ENCODE measurements at regions of chr12 and their contacts with region 1.

Region 1: DNA sequence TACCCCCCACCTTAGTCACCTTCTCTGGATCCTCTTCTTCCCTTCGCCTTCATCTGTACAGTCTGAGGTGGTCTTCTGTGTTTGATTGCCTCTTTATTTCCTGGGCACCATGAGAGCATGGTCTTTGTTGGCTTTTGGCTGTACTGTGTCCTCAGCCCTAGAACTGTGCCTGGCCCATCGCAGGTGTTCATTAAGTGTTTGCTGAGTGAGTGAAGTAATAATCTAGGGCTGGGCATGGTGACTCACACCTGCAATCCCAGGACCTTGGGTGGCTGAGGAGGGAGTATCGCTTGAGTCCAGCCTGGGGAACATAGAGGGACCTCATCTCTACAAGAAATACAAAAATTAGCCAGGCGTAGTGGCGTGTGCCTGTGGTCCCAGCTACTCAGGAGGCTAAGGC is 13.9 kb downstream of the ALDH2 start:
- DNase-seq: no peak
- ATAC-seq: no peak
- H3K4me3 ChIP-seq: no peak overlapping the region
- H3K27ac ChIP-seq: no peak overlapping the region
- H3K4me1 ChIP-seq: peaks cover 47% of the 10 kb centered on the region
- H3K27me3 ChIP-seq: no peaks in the 10 kb centered on the region
- CTCF ChIP-seq: no peak
- EP300 ChIP-seq: no peak
- POLR2A ChIP-seq: no peak
- RAD21 ChIP-seq: no peak

Region 2: DNA sequence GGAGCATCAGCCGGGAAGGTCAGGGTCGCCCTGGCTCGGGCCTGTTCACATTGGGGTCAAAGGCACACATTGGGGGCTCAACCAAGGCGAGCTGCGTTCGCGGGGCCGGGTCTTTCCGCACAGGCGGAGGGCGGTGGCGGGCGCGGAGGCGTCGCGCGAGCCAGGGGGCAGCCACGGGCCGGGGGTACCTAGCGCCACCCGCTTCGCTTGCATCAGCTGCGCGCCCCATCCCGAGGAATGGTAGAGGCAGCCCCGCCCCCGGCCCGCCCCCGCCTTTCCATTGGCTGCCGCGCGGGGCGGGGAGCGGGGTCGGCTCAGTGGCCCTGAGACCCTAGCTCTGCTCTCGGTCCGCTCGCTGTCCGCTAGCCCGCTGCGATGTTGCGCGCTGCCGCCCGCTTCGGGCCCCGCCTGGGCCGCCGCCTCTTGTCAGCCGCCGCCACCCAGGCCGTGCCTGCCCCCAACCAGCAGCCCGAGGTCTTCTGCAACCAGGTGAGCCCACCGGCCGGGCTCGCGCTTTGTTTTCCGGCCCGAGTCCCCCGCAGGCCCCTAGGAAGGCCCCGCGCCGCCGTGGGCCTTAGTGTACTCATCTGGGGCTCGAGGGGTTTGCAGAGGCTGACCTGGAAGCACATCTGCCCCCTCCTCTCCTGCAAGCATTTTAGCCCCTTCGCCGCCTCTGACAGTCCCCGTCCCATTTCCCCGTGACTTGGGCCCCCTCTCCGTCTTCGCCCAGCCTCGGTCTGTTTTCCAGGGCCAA is 13.8 kb before region 1 on chr12 and contains the start of gene ALDH2:
- CTCF ChIA-PET with region 1: no interaction called
- POLR2A ChIA-PET with region 1: interaction called, 94 read pairs
- in situ Hi-C with region 1: no loop called
- intact Hi-C with region 1: no loop called
- DNase-seq: peak; percentile 72
- ATAC-seq: peak; percentile 95
- H3K4me3 ChIP-seq: peak within 1 kb of the TSS; percentile 79 to 92 (median 80)
- H3K27ac ChIP-seq: peak within 1 kb of the TSS; percentile 74
- H3K4me1 ChIP-seq: peaks cover 48% of the 10 kb centered on the region
- H3K27me3 ChIP-seq: no peaks in the 10 kb centered on the region; a peak in 1 of 5 replicates
- CTCF ChIP-seq: peak; percentile 61
- EP300 ChIP-seq: no peak
- POLR2A ChIP-seq: peak; percentile 69 to 94
- RAD21 ChIP-seq: peak; percentile 59; the same call in 1 of the 2 replicates
- total RNA-seq, gene ALDH2: 72.8 and 103 TPM in 2 replicates

Region 3: GRCh38 chr12:111887926-111888745 is 107.5 kb after region 1 on chr12:
- CTCF ChIA-PET with region 1: no interaction called
- POLR2A ChIA-PET with region 1: no interaction called
- in situ Hi-C with region 1: no loop called
- intact Hi-C with region 1: no loop called
- DNase-seq: no peak
- ATAC-seq: no peak
- H3K4me3 ChIP-seq: no peak overlapping the region
- H3K27ac ChIP-seq: no peak overlapping the region
- H3K4me1 ChIP-seq: no peaks in the 10 kb centered on the region
- H3K27me3 ChIP-seq: no peaks in the 10 kb centered on the region
- CTCF ChIP-seq: no peak
- EP300 ChIP-seq: no peak
- POLR2A ChIP-seq: no peak
- RAD21 ChIP-seq: no peak